OCI-LY7 (cell line): ENCODE measurements at regions of chr15 and their contacts with region 1.

Region 1: DNA sequence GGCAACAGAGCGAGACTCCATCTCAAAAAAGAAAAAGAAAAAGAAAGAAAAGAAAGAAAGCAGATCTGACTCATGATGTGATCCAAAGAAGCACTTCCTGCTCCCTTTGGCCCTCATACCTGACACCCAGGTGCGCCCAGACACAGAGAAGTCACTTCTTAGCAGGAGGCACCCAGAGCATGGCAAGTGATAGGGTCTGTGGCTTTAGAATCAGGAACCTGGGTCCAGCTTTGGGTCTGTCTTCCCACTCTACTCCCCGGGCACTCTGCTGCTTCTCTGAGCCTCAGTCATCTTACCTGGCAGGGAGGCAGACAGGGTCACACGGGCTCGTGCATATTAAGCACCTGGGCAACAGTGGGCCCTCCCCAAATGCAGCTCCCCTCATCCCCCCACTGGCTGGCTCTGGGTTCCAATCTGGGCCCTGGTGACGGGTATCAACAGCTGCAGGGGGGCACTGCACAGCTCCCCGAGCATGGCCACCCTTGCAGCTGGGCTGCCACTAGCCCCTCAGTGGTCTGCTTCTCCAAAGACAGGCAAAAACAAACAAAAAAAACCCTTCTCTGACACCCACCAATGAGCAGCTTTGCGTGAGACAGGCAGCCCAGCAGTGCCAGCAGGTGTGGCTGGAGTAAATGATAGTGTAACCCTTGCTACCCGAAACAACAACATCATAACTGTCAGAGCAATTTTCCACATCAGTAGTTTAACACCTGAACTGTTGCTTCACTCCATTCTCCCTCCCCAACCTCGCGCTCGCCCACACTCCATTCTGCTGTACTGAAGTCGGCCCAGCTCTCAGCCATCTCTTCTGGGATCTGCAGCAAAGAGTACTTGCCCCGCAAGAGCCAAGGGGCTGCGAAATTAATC is 99.8 kb downstream of the MEGF11 start:
- DNase-seq: peak; percentile 98
- H3K4me3 ChIP-seq: peak overlapping the region; percentile 53
- H3K27ac ChIP-seq: peak overlapping the region; percentile 99
- H3K4me1 ChIP-seq: peaks cover 85% of the 10 kb centered on the region
- CTCF ChIP-seq: no peak

Region 2: GRCh38 chr15:66169023-66169422 is 15.2 kb after region 1 on chr15:
- CTCF ChIA-PET with region 1: interaction called, 14 read pairs
- POLR2A ChIA-PET with region 1: interaction called, 148 read pairs
- intact Hi-C with region 1: loop called (anchors 1 kb)
- DNase-seq: peak; percentile 92
- H3K4me3 ChIP-seq: peak overlapping the region; percentile 13
- H3K27ac ChIP-seq: peak overlapping the region; percentile 92
- H3K4me1 ChIP-seq: peaks cover 85% of the 10 kb centered on the region
- CTCF ChIP-seq: no peak

Region 3: GRCh38 chr15:66178531-66178910 is 24.7 kb after region 1 on chr15:
- CTCF ChIA-PET with region 1: interaction called, 10 read pairs
- POLR2A ChIA-PET with region 1: interaction called, 20 read pairs
- intact Hi-C with region 1: no loop called
- DNase-seq: peak; percentile 69
- H3K4me3 ChIP-seq: peak overlapping the region; percentile 44
- H3K27ac ChIP-seq: peak overlapping the region; percentile 57
- H3K4me1 ChIP-seq: peaks cover 89% of the 10 kb centered on the region
- CTCF ChIP-seq: no peak

Region 4: GRCh38 chr15:66184936-66185790 is 31.4 kb after region 1 on chr15:
- CTCF ChIA-PET with region 1: interaction called, 3 read pairs
- POLR2A ChIA-PET with region 1: interaction called, 12 read pairs
- intact Hi-C with region 1: no loop called
- DNase-seq: no peak
- H3K4me3 ChIP-seq: no peak overlapping the region
- H3K27ac ChIP-seq: no peak overlapping the region
- H3K4me1 ChIP-seq: peaks cover 77% of the 10 kb centered on the region
- CTCF ChIP-seq: no peak

Region 5: DNA sequence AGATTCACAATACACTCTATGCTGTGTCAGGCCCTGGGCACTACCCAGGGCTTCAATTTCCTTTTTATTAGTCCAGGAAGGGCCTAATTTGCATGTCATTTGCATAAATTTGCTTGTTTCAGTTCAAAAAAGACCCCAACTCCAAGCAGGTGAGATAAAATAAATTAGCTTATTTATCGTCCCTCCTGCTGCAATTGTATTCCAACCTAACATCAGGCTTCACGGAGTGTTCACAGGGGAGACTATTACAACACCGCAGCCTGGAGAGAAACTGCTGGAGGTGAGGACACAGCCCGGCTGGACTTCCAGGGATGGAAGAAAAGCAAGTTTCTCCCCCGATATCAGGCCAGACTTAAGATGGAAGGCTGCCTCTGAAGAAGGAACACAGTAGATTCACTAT is 37.0 kb after region 1 on chr15:
- CTCF ChIA-PET with region 1: interaction called, 3 read pairs
- POLR2A ChIA-PET with region 1: interaction called, 12 read pairs
- intact Hi-C with region 1: loop called (anchors 1 kb)
- DNase-seq: no peak
- H3K4me3 ChIP-seq: no peak overlapping the region
- H3K27ac ChIP-seq: no peak overlapping the region
- H3K4me1 ChIP-seq: peaks cover 57% of the 10 kb centered on the region
- CTCF ChIP-seq: no peak

Region 6: GRCh38 chr15:66293419-66294156 is 139.8 kb after region 1 on chr15 and contains the start of gene DIS3L:
- CTCF ChIA-PET with region 1: no interaction called
- POLR2A ChIA-PET with region 1: interaction called, 4 read pairs
- intact Hi-C with region 1: loop called (anchors 2 kb)
- DNase-seq: peak; percentile 87
- H3K4me3 ChIP-seq: peak within 1 kb of the TSS; percentile 69
- H3K27ac ChIP-seq: peak within 1 kb of the TSS; percentile 88
- H3K4me1 ChIP-seq: peaks cover 44% of the 10 kb centered on the region
- CTCF ChIP-seq: no peak
- total RNA-seq, gene DIS3L: 33.9 and 41.2 TPM in 2 replicates

Region 7: GRCh38 chr15:66356345-66357236 is 202.8 kb after region 1 on chr15 and contains the start of gene TIPIN:
- CTCF ChIA-PET with region 1: no interaction called
- POLR2A ChIA-PET with region 1: interaction called, 3 read pairs
- intact Hi-C with region 1: loop called (anchors 10 kb)
- DNase-seq: peak; percentile 99
- H3K4me3 ChIP-seq: peak within 1 kb of the TSS; percentile 87
- H3K27ac ChIP-seq: peak within 1 kb of the TSS; percentile 84
- H3K4me1 ChIP-seq: peaks cover 50% of the 10 kb centered on the region
- CTCF ChIP-seq: no peak
- total RNA-seq, gene TIPIN: 26.0 and 28.6 TPM in 2 replicates